ENCODE measurements at regions of chr7 and their contacts with region 1.

Region 1: DNA sequence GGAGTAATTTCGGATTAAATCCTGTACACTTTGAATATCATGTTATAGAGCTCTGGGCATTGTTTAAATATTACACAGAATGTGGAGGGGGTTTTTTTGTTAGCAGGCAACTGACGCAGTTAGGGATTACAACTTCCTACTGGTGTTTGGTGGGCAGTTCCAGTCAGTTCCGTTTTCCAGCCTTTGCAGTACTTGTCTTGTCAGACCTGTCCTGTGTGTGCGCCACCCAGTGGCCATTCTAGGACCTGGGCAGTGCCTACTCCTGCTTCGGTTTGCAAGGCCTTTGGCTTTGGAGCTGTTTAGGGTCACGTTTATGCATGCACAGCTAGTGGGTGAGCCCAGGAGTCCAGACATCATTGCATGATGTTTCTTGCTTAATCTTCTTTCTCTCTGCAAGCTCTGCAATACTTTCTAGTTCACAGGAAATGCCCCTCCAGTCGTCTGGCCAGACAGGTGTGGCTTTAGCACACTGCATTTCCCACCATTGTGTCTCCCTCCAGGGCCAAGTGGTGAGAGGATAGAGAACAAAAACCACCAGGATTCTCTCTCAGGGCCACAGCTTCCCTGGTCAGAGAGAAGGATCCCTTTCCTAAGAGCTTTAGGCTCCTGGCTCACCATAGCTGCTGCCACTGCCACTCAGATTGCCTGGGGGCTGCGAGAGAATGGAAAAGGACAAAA is 96.5 kb upstream of the TARP start:
- DNase-seq: peak; percentile 87
- ATAC-seq: peak; percentile 81
- H3K4me3 Mint-ChIP-seq: peak overlapping the region; percentile 13
- H3K27ac Mint-ChIP-seq: peak overlapping the region; percentile 70
- H3K4me1 Mint-ChIP-seq: peaks cover 54% of the 10 kb centered on the region
- H3K27me3 Mint-ChIP-seq: no peaks in the 10 kb centered on the region

Region 2: GRCh38 chr7:38179776-38180226 is 190.2 kb before region 1 on chr7:
- CTCF ChIA-PET with region 1: interaction called, 10 read pairs
- POLR2A ChIA-PET with region 1: no interaction called
- DNase-seq: no peak
- ATAC-seq: no peak
- H3K4me3 Mint-ChIP-seq: peak overlapping the region; percentile 93
- H3K27ac Mint-ChIP-seq: no peak overlapping the region
- H3K4me1 Mint-ChIP-seq: peaks cover 29% of the 10 kb centered on the region
- H3K27me3 Mint-ChIP-seq: no peaks in the 10 kb centered on the region

Region 3: DNA sequence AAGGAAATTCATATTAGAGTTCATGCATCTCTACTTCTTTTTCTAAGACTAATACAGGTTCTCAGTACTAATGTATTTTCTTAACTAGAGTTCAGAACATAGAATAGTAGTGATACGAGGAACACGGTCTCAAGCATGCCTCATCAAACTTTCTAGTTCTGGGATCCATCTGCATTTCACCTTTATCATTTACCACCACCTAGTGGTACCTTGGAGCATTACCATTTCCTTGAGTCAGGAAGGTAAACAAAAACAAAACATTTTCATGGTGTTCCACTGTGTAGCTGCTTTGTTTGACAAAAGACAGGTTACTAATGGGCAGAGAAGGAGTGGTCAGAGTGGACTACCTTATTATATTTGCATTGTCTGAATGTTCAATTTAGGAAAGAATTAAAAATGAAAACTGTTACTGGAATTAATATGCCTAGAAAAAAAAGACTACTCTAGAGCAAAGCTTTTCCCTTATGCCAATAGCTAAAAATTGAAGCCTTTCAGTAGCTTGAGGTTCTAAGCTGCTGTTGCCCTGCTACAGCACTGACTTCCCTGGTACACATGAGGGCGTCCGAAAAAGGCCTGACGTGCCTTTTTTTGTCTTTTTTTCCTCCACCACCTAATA is 147.4 kb before region 1 on chr7:
- CTCF ChIA-PET with region 1: interaction called, 346 read pairs
- POLR2A ChIA-PET with region 1: interaction called, 3 read pairs
- DNase-seq: peak; percentile 57
- ATAC-seq: peak; percentile 56
- H3K4me3 Mint-ChIP-seq: no peak overlapping the region
- H3K27ac Mint-ChIP-seq: no peak overlapping the region
- H3K4me1 Mint-ChIP-seq: peaks cover 76% of the 10 kb centered on the region
- H3K27me3 Mint-ChIP-seq: no peaks in the 10 kb centered on the region

Region 4: GRCh38 chr7:38335492-38336147 is 34.3 kb before region 1 on chr7:
- CTCF ChIA-PET with region 1: interaction called, 51 read pairs
- POLR2A ChIA-PET with region 1: no interaction called
- DNase-seq: peak; percentile 90
- ATAC-seq: peak; percentile 89
- H3K4me3 Mint-ChIP-seq: peak overlapping the region; percentile 84
- H3K27ac Mint-ChIP-seq: peak overlapping the region; percentile 83
- H3K4me1 Mint-ChIP-seq: peaks cover 58% of the 10 kb centered on the region
- H3K27me3 Mint-ChIP-seq: no peaks in the 10 kb centered on the region

Region 5: DNA sequence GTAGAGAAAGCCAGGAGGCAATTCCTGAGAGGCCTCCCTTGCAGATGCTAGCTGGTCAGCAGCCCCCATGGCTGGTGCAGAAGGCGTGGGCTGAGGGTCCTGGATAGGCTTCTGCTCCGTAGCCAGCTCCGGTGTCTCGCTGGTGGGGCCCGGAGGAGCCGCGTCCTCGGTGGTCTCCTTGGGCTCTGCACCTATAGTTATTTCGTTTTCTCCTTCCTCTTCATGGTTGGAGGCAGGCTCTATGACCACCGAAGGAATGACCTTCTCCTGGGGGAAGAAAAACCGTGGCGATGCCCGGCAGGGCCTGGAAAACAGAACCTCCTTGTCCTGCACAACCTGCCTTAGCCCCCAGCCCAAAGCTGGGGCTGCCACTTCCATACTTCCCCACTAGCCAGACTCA is 21.8 kb after region 1 on chr7:
- CTCF ChIA-PET with region 1: interaction called, 45 read pairs
- POLR2A ChIA-PET with region 1: no interaction called
- DNase-seq: no peak
- ATAC-seq: no peak
- H3K4me3 Mint-ChIP-seq: no peak overlapping the region
- H3K27ac Mint-ChIP-seq: no peak overlapping the region
- H3K4me1 Mint-ChIP-seq: no peaks in the 10 kb centered on the region
- H3K27me3 Mint-ChIP-seq: peaks cover 2% of the 10 kb centered on the region

Region 6: DNA sequence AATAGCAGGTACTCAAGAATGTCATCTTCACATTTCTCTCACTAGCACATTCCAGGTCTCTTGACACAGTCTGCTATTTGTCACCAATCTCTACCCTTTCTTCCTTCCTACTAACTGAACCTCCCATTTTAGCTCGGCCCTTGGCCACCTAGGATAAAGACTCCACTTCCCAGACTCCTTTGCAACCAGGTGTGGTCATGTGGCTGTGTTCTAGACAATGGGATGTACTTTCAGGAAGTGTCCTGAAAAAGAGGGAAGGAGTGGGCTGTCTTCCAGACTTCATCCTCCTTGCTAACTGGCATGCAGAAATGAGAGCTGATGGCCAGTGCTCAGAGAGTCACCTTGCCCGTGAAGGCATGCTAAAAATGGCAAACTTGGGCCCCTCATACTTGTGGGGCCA is 122.1 kb after region 1 on chr7:
- CTCF ChIA-PET with region 1: no interaction called
- POLR2A ChIA-PET with region 1: no interaction called
- DNase-seq: no peak
- ATAC-seq: no peak
- H3K4me3 Mint-ChIP-seq: no peak overlapping the region
- H3K27ac Mint-ChIP-seq: no peak overlapping the region
- H3K4me1 Mint-ChIP-seq: no peaks in the 10 kb centered on the region
- H3K27me3 Mint-ChIP-seq: peaks cover 11% of the 10 kb centered on the region

Measured in activated CD8-positive, alpha-beta T cell treated with anti-CD3 and anti-CD28 coated beads, Interleukin-2, amount 10 ng/mL, durations not matched to agents 7 days and 5 days (primary cell).